CD4-positive, alpha-beta memory T cell (primary cell): ENCODE measurements at regions of chr15 and their contacts with region 1.

Region 1: GRCh38 chr15:78149068-78149804 is at the start of gene IDH3A:
- DNase-seq: peak; percentile 98 to 99 (median 99)
- H3K4me3 ChIP-seq: peak within 1 kb of the TSS; percentile 63 to 68
- H3K4me3 Mint-ChIP-seq: peak within 1 kb of the TSS; percentile 92 to 99 (median 94)
- H3K27ac ChIP-seq: peak within 1 kb of the TSS; percentile 74
- H3K27ac Mint-ChIP-seq: peak within 1 kb of the TSS; percentile 91 to 96 (median 94)
- H3K4me1 ChIP-seq: peaks cover 26% of the 10 kb centered on the region
- H3K4me1 Mint-ChIP-seq: peaks cover 28 to 46% (median 38%) of the 10 kb centered on the region in 4 donors
- H3K27me3 ChIP-seq: no peaks in the 10 kb centered on the region
- H3K27me3 Mint-ChIP-seq: no peaks in the 10 kb centered on the region
- total RNA-seq, gene IDH3A: 45.1 to 46.8 TPM

Region 2: GRCh38 chr15:77907824-77908751 is 241.1 kb before region 1 on chr15:
- CTCF ChIA-PET with region 1: no interaction called
- POLR2A ChIA-PET with region 1: no interaction called
- intact Hi-C with region 1: no loop called
- DNase-seq: peak in 3 of 5 donors; percentile 12 to 36 (median 18)
- H3K4me3 ChIP-seq: no peak overlapping the region
- H3K4me3 Mint-ChIP-seq: no peak overlapping the region
- H3K27ac ChIP-seq: no peak overlapping the region
- H3K27ac Mint-ChIP-seq: no peak overlapping the region
- H3K4me1 ChIP-seq: no peaks in the 10 kb centered on the region
- H3K4me1 Mint-ChIP-seq: no peaks in the 10 kb centered on the region
- H3K27me3 ChIP-seq: no peaks in the 10 kb centered on the region
- H3K27me3 Mint-ChIP-seq: peaks cover 2 to 4% of the 10 kb centered on the region in 2 donors

Region 3: DNA sequence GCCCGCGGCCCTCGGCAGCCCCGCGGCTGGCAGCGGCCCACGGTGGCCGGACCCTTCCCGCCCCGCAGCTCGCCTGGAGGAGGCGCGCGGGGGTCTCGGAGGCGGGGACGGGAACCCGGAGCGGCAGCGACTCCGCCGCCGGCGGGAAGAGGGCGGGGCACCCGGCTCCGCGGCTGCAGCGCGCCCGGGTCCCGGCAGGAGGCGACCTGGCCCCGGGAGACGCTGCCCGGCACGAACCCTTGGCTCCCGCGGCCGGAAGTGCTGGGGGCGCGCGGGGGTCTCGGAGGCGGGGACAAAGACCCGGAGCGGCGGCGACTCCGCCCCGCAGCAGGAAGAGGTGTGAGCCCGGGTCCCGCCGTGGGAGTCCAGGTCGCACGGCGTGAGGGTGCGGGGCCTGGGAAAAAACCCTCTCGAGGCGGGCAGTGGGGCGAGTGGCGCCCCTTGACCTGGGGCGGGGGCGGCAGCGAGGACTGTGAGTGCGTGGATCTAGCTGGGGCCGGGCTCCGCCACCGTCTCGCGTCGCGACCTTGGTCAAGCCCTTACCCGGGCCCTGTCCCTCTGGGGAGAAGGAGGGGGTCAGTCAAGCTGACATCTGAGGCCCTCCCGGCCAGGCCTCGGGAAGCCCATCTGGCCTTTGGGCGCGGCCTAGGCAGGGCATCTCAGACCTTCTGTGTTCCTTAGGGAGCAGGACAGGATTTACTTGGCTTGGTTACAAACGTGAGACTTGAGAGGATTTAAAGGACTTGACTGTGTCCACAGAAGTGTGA is 17.8 kb before region 1 on chr15 and contains the start of gene CIB2:
- CTCF ChIA-PET with region 1: interaction called, 9 read pairs
- POLR2A ChIA-PET with region 1: interaction called, 32 read pairs
- intact Hi-C with region 1: loop called (anchors 1 kb)
- DNase-seq: peak; percentile 72 to 82 (median 76)
- H3K4me3 ChIP-seq: peak within 1 kb of the TSS; percentile 81 to 88
- H3K4me3 Mint-ChIP-seq: peak within 1 kb of the TSS; percentile 79 to 93 (median 80)
- H3K27ac ChIP-seq: peak within 1 kb of the TSS; percentile 66
- H3K27ac Mint-ChIP-seq: peak within 1 kb of the TSS; percentile 79 to 95 (median 88)
- H3K4me1 ChIP-seq: peaks cover 12% of the 10 kb centered on the region
- H3K4me1 Mint-ChIP-seq: peaks cover 7 to 30% (median 20%) of the 10 kb centered on the region in 4 donors
- H3K27me3 ChIP-seq: no peaks in the 10 kb centered on the region
- H3K27me3 Mint-ChIP-seq: peaks cover 0 to 1% of the 10 kb centered on the region in 2 donors
- total RNA-seq, gene CIB2: 1.0 to 1.7 TPM

Region 4: GRCh38 chr15:78264304-78265136 is 115.3 kb after region 1 on chr15 and contains the start of gene DNAJA4:
- CTCF ChIA-PET with region 1: no interaction called
- POLR2A ChIA-PET with region 1: interaction called, 13 read pairs
- intact Hi-C with region 1: no loop called
- DNase-seq: peak; percentile 67 to 76 (median 73)
- H3K4me3 ChIP-seq: peak within 1 kb of the TSS; percentile 55 to 58
- H3K4me3 Mint-ChIP-seq: peak within 1 kb of the TSS; percentile 88 to 94 (median 89)
- H3K27ac ChIP-seq: peak within 1 kb of the TSS; percentile 63
- H3K27ac Mint-ChIP-seq: peak within 1 kb of the TSS; percentile 87 to 96 (median 91)
- H3K4me1 ChIP-seq: peaks cover 22% of the 10 kb centered on the region
- H3K4me1 Mint-ChIP-seq: peaks cover 19 to 34% (median 22%) of the 10 kb centered on the region in 4 donors
- H3K27me3 ChIP-seq: no peaks in the 10 kb centered on the region
- H3K27me3 Mint-ChIP-seq: no peaks in the 10 kb centered on the region
- total RNA-seq, gene DNAJA4: 31.5 to 32.8 TPM